Pancreas (tissue), 10 donors: ENCODE measurements at regions of chr18 and their contacts with region 1.

Region 1: DNA sequence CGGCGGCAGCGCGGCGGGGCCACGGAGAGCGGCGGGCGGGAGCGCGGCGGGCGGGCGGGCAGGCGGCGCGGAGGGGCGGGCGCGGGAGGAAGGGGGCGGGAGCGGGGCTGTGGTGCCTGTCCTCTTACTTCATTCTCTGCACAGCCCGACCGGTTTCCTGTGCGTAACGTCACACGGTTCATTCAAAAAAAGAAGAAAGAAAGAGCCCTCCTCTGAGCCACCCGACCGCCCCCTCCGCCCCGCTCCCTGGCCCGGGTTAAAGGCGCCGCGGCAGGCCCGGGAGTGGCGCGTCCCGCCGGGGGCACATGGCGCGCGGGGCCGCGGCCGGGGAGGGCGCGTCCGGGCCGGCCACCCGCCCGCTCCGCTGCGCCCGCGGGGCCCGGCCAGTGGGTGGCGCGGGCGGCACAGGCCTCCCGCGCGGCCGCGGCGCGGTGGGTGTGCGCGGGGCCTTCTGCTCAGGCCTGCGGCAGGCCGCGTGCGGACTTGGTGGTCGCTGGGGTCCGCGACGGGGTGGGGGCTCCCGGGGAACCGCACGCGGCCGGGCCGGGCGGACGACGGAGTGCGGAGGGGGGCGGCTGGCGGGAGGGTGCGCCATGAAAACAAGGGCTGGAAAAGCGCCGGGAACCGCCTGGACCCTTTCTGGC is 599 bp upstream of the BCL2 start:
- DNase-seq: peak; percentile 67 to 83 (median 72)
- ATAC-seq: peak; percentile 66 to 75 (median 72)
- H3K4me3 ChIP-seq: peak overlapping the region in 3 of 4 donors; percentile 43 to 67 (median 50)
- H3K27ac ChIP-seq: peak overlapping the region in 3 of 4 donors; percentile 67 to 82 (median 70)
- H3K4me1 ChIP-seq: peaks cover 0 to 7% (median 0%) of the 10 kb centered on the region in 3 donors
- H3K27me3 ChIP-seq: no peaks in the 10 kb centered on the region
- CTCF ChIP-seq: no peak

Region 2: DNA sequence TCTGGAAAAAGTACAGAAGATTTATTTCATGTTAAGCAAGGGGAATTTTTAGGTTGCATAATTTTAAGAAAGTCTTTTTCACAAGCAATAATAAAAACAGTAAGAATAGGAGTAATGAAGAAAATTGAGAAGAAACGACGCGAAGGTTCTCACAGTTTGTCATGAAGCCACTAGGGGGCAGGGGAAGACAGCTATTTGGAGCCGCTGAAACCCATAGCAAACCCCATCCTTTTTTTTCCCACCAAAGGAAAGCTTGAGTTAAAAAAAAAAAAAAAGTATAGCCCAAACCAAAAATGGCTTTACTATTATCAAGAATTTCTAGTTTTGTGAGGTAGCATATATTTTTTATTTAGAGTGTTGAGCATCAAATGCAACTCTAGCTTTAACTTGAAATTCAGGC is 303.9 kb before region 1 on chr18:
- intact Hi-C with region 1: loop called (anchors 5 to 10 kb)
- DNase-seq: peak in 1 of 6 donors; percentile 46
- ATAC-seq: peak in 3 of 4 donors; percentile 83 to 90 (median 87)
- H3K4me3 ChIP-seq: no peak overlapping the region
- H3K27ac ChIP-seq: no peak overlapping the region
- H3K4me1 ChIP-seq: no peaks in the 10 kb centered on the region
- H3K27me3 ChIP-seq: no peaks in the 10 kb centered on the region
- CTCF ChIP-seq: peak; percentile 41 to 71 (median 58)

Region 3: DNA sequence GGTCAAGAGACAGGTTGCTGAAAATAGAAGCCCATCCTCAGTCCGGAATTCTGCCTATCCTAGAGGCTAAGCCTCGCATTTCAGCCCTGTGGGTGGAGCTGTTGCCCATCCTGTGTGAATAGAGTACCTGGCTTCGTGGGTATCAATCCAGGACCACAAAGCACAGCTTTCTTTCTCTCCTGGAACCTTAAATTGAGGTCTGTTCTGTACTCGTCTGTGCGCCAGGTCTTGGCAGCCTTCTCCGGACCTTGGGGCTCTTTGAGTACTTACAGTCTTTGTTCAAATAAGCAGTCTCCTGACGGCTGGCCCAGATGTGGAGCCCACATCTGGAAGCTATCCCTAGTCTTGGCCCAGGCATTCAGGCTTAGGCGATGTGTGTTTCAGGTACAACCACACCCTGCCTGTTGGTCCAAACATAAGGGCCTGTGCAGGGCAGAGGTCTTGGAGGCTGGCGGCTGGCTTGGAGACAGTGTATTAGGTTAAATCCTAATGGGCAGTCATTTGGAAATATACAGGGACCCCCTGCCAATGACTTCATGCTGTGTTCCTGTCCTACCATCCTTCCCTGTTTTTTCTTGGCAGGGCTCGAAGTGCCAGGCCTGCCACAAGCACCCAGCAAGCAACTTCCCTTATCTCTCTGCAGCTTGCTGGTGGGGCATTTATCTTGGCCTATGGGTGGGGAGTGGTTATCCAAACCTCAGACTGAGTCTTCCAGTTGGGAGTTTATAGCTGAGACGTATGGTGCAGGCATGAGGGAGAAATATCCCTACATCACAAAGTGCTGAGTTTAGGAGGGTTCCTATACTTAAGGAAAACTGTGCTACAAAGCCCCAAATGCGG is 294.7 kb before region 1 on chr18:
- intact Hi-C with region 1: loop called in 2 of 3 experiments (anchors 10 kb)
- DNase-seq: no peak
- ATAC-seq: peak in 3 of 4 donors; percentile 41 to 65 (median 64)
- H3K4me3 ChIP-seq: no peak overlapping the region
- H3K27ac ChIP-seq: no peak overlapping the region
- H3K4me1 ChIP-seq: no peaks in the 10 kb centered on the region
- H3K27me3 ChIP-seq: peaks cover 0 to 3% (median 0%) of the 10 kb centered on the region in 4 donors
- CTCF ChIP-seq: peak in 1 of 4 donors; percentile 16

Region 4: DNA sequence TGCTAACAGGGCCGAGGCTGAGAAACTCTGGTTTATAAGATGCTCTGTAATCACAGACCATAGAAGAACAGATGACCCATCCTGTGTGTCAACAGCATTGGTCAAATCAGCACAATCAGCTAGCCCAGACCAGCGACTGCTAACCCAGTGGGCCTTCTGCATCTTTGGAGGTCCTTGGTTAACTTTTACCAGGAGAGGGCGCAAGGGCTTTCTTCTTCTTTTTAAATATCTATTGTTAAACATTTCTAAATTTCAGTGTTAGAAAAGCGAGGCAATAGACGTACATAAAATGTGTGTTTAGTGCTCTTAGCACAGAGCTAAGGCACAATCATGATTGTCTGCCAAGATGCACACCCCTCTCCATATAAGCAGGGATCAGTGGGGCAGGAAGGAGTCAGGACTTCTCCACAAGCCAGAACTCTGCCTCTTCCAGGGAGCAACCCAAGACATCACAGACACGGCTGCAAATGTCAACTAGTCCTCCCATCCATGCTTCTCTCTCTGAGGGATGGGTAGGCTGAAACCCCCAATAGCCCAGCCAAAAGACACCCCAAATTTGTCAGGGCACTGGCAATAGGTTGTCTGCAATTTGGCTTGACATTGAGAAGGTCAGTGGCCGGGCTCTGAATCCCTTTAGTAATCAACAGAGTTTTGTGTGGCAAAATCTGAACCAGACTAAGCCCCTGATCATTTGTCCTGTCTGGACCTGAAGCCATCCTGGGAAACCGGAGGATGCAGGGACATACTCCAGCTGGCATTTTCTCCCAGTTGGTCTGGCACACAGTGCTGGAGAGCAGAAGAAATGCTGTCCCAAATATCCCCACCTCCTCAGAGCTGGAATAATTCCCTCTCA is 188.8 kb before region 1 on chr18:
- intact Hi-C with region 1: loop called in 1 of 3 experiments (anchors 10 kb)
- DNase-seq: peak in 1 of 6 donors; percentile 34
- ATAC-seq: peak in 3 of 4 donors; percentile 62 to 73 (median 64)
- H3K4me3 ChIP-seq: no peak overlapping the region
- H3K27ac ChIP-seq: no peak overlapping the region
- H3K4me1 ChIP-seq: peaks cover 0 to 5% (median 0%) of the 10 kb centered on the region in 3 donors
- H3K27me3 ChIP-seq: no peaks in the 10 kb centered on the region
- CTCF ChIP-seq: peak; percentile 11 to 45 (median 26)

Region 5: DNA sequence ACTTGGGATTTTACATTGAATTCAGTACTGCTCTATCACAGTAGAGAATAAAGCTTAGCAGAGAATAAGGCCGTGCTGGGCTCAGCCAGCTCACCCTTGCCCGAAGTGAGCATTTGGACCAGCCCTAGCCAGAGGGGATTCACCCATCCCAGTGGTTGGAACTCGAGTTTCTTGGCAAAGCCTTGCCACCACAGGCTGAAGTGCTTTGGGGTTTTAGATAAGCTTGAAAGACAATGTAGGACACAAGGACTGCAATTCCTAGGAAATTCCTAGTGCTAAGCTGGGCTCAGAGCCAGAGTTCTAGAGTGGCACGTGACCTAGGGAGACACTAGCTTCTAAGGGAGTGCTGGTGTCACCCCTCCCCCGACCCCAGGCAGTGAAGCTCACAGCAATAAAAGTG is 410.6 kb after region 1 on chr18:
- intact Hi-C with region 1: no loop called
- DNase-seq: no peak
- ATAC-seq: no peak
- H3K4me3 ChIP-seq: no peak overlapping the region
- H3K27ac ChIP-seq: no peak overlapping the region
- H3K4me1 ChIP-seq: no peaks in the 10 kb centered on the region
- H3K27me3 ChIP-seq: no peaks in the 10 kb centered on the region
- CTCF ChIP-seq: no peak